ENCODE measurements at regions of chr19 and their contacts with region 1.

Region 1: GRCh38 chr19:46319613-46320012 is 22.8 kb downstream of the HIF3A start:
- DNase-seq: no peak
- ATAC-seq: no peak
- H3K4me3 ChIP-seq: no peak overlapping the region
- H3K27ac ChIP-seq: peak overlapping the region; percentile 9
- H3K4me1 ChIP-seq: no peaks in the 10 kb centered on the region
- H3K27me3 ChIP-seq: no peaks in the 10 kb centered on the region
- CTCF ChIP-seq: no peak

Region 2: DNA sequence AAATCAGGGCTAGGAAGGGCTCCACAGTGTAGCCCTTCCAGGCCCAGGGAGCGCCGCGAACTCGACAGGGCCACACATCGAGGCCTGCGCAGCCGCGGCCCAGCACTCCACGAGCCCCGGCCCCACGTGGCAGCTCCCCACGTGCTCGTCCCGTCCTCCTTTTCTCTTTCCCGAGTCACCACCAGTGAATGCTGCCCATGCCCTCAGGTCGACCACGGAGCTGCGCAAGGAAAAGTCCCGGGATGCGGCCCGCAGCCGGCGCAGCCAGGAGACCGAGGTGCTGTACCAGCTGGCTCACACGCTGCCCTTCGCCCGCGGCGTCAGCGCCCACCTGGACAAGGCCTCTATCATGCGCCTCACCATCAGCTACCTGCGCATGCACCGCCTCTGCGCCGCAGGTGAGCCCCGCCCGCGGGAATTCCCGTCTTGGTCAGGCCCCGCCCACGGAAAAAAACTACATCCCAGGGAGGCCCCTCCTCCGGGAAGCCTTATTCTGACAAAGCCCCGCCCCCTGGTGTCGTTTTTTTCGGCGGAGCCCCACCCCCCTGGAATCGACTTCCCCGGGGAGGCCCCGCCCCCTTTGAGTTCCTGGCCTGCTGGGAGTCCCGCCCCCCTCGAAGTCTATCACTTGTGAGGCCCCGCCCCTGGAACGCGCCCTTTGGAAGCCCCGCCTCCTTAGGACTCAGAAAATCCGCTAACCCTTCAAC is 15.8 kb before region 1 on chr19:
- intact Hi-C with region 1: loop called in 1 of 2 experiments (anchors 1 kb)
- DNase-seq: peak; percentile 55 to 73
- ATAC-seq: no peak
- H3K4me3 ChIP-seq: no peak overlapping the region
- H3K27ac ChIP-seq: no peak overlapping the region
- H3K4me1 ChIP-seq: no peaks in the 10 kb centered on the region
- H3K27me3 ChIP-seq: peaks cover 0 to 25% (median 2%) of the 10 kb centered on the region in 3 donors
- CTCF ChIP-seq: no peak

Measured in psoas muscle (tissue), 8 donors.